Endothelial cell of umbilical vein (primary cell): ENCODE measurements at regions of chr10 and their contacts with region 1.

Region 1: DNA sequence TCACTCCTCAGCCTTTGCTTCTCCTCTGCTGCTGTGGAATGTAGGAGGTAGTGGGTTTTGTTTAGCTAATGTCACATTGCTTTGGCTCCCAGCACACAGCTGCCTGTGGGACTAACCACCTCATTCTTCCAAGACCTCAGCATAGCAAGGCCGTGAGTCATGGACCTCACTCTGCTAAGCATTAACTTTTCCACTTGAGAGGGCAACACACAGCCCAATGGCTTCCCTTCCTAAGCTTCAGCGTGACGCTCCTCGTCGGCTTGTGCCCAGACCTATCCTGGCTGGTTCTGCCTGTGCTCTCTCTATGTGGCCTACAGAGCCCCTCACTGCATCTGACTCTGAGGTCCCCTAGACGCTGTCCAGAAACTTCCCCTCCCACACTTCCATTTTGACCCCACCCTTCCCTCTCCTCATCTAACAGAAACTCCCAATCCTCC is 23.3 kb downstream of the MYOF start:
- DNase-seq: peak; percentile 98
- H3K4me3 ChIP-seq: no peak overlapping the region
- H3K27ac ChIP-seq: peak overlapping the region; percentile 85
- H3K4me1 ChIP-seq: peaks cover 57% of the 10 kb centered on the region
- H3K27me3 ChIP-seq: no peaks in the 10 kb centered on the region
- CTCF ChIP-seq: no peak
- POLR2A ChIP-seq: peak; percentile 48

Region 2: GRCh38 chr10:92839191-92840085 is 619.4 kb before region 1 on chr10:
- CTCF ChIA-PET with region 1: no interaction called
- POLR2A ChIA-PET with region 1: no interaction called
- dilution Hi-C with region 1: no loop called
- intact Hi-C with region 1: loop called (anchors 10 kb)
- DNase-seq: peak; percentile 97
- H3K4me3 ChIP-seq: peak overlapping the region in 1 of 3 experiments; percentile 2
- H3K27ac ChIP-seq: peak overlapping the region; percentile 97
- H3K4me1 ChIP-seq: peaks cover 76% of the 10 kb centered on the region
- H3K27me3 ChIP-seq: no peaks in the 10 kb centered on the region
- CTCF ChIP-seq: peak; percentile 26 to 31
- POLR2A ChIP-seq: no peak

Region 3: DNA sequence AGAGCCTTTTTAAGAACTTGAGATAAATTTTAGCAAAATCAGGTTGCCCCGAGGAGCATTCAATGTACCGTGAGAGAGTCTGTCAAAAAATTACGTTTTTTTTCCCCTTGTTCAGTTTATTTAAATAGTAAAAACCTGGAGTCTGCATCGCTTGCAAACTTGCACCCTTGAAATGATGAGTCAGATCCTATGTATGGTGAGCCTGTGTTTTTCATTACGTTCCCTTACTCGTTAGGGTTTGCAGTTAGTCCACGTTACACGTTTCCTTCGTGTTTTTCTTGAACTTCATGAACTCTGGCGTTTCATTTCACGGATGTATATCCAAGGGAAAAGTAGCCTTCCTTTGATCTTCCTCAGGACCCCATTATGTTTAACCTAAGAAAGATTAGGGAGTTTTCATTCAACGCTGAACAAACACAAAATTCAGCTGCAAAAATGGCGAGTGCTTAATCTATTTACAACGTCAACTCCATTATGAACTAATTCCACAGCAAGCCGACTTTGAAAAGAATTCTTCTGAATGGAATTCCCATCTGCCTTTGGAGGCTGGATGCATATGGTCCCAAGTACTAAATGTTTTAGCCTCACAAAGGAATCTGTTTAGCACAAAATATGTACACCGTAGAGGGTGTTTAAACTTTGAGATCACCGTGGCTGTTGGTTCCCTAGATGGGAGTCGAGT is 159.1 kb before region 1 on chr10:
- CTCF ChIA-PET with region 1: no interaction called
- POLR2A ChIA-PET with region 1: no interaction called
- dilution Hi-C with region 1: no loop called
- intact Hi-C with region 1: no loop called
- DNase-seq: no peak
- H3K4me3 ChIP-seq: no peak overlapping the region
- H3K27ac ChIP-seq: no peak overlapping the region
- H3K4me1 ChIP-seq: no peaks in the 10 kb centered on the region
- H3K27me3 ChIP-seq: no peaks in the 10 kb centered on the region
- CTCF ChIP-seq: no peak
- POLR2A ChIP-seq: no peak

Region 4: GRCh38 chr10:93437088-93437945 is 21.5 kb before region 1 on chr10:
- CTCF ChIA-PET with region 1: interaction called, 12 read pairs
- POLR2A ChIA-PET with region 1: interaction called, 17 read pairs
- dilution Hi-C with region 1: no loop called
- intact Hi-C with region 1: loop called (anchors 1 kb)
- DNase-seq: peak; percentile 99
- H3K4me3 ChIP-seq: no peak overlapping the region
- H3K27ac ChIP-seq: peak overlapping the region; percentile 100
- H3K4me1 ChIP-seq: peaks cover 52% of the 10 kb centered on the region
- H3K27me3 ChIP-seq: no peaks in the 10 kb centered on the region
- CTCF ChIP-seq: no peak
- POLR2A ChIP-seq: peak; percentile 50

Region 5: DNA sequence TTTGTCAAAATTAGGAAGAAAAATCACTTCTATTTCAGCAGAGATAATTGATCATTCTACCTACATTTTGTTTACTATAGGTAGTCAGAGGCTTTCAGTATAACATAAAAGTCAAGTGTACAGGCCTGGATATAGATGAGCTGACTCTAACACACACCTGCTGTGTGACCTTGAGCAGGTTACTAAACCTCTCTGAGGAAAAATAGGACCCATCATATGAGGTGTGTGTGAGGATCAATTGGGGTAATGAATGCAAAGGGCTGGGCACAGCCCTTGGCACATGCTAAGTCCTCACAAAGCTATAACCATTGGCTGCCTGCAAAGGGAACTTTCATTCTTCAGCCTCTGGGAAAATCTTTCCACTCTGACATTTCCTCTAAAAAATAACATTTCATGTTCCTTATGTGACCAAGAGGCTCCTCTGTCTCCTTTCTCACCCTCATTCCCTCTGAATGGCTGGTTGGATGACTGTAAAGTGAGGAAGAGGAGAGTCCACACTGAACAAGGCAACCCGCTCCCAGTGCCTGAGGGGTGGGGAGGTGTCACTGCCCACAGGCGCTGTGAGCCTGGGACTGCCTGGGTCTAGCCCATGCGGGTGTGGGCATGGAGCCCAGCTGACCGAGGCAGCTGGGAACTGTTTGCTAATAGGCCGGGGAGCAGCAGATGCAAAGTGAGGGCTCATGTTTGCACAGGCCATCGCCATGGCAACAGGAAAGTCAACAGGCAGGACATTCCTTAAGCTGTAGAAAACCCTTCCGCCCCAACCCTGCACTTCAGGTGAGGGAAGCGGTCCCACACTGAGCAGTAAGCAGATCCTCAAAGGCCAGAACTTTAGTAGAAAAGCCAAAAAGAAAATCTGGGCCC is 13.5 kb before region 1 on chr10:
- CTCF ChIA-PET with region 1: interaction called, 12 read pairs
- POLR2A ChIA-PET with region 1: interaction called, 17 read pairs
- dilution Hi-C with region 1: no loop called
- intact Hi-C with region 1: loop called (anchors 1 kb)
- DNase-seq: peak; percentile 98
- H3K4me3 ChIP-seq: no peak overlapping the region
- H3K27ac ChIP-seq: peak overlapping the region; percentile 67
- H3K4me1 ChIP-seq: peaks cover 22% of the 10 kb centered on the region
- H3K27me3 ChIP-seq: no peaks in the 10 kb centered on the region
- CTCF ChIP-seq: no peak
- POLR2A ChIP-seq: peak; percentile 15

Region 6: DNA sequence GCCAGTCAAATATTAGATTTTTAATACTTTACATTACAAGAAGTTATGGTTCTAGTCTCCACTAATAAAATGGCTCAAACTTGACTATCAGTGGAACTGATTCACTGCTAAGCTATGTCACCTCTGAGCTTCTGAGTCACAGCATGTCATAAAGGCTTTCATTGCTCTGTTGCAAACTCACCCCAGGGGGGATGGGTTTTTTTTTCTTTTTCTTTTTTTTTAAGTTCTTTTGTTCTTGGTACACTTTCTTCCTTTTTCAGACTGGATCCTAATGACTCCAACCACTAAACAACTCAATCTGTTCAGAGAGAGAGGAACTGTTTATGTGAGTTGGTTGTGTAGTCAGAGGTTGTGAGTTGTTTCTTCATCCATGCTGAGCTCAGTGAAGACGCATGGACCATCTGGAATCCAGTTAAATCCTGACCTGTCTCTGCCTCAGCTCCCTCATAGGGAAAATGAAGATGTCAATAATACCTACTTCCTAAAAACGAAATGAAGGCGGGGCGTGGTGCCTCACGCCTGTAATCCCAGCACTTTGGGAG is 12.3 kb after region 1 on chr10:
- CTCF ChIA-PET with region 1: interaction called, 18 read pairs
- POLR2A ChIA-PET with region 1: interaction called, 26 read pairs
- dilution Hi-C with region 1: no loop called
- intact Hi-C with region 1: loop called (anchors 1 kb)
- DNase-seq: peak; percentile 97
- H3K4me3 ChIP-seq: no peak overlapping the region
- H3K27ac ChIP-seq: peak overlapping the region; percentile 86
- H3K4me1 ChIP-seq: peaks cover 87% of the 10 kb centered on the region
- H3K27me3 ChIP-seq: no peaks in the 10 kb centered on the region
- CTCF ChIP-seq: no peak
- POLR2A ChIP-seq: no peak